ENCODE measurements at regions of chr7 and their contacts with region 1.

Region 1: GRCh38 chr7:116671681-116672595 is at the start of gene MET:
- DNase-seq: peak; percentile 91 to 92
- H3K4me3 ChIP-seq: peak within 1 kb of the TSS; percentile 84
- H3K4me3 Mint-ChIP-seq: peak within 1 kb of the TSS; percentile 94
- H3K27ac Mint-ChIP-seq: peak within 1 kb of the TSS; percentile 47
- H3K4me1 ChIP-seq: peaks cover 5% of the 10 kb centered on the region
- H3K4me1 Mint-ChIP-seq: peaks cover 13% of the 10 kb centered on the region
- H3K27me3 ChIP-seq: no peaks in the 10 kb centered on the region
- H3K27me3 Mint-ChIP-seq: no peaks in the 10 kb centered on the region
- CTCF ChIP-seq: peak; percentile 70 to 87
- total RNA-seq, gene MET: 72.6 and 82.9 TPM in 2 replicates

Region 2: GRCh38 chr7:116165717-116166116 is 506.2 kb before region 1 on chr7:
- CTCF ChIA-PET with region 1: no interaction called
- POLR2A ChIA-PET with region 1: no interaction called
- intact Hi-C with region 1: loop called (anchors 5 kb)
- DNase-seq: no peak
- H3K4me3 ChIP-seq: no peak overlapping the region
- H3K4me3 Mint-ChIP-seq: no peak overlapping the region
- H3K27ac Mint-ChIP-seq: no peak overlapping the region
- H3K4me1 ChIP-seq: peaks cover 48% of the 10 kb centered on the region
- H3K4me1 Mint-ChIP-seq: peaks cover 43% of the 10 kb centered on the region
- H3K27me3 ChIP-seq: no peaks in the 10 kb centered on the region
- H3K27me3 Mint-ChIP-seq: no peaks in the 10 kb centered on the region
- CTCF ChIP-seq: no peak

Region 3: GRCh38 chr7:116478834-116479233 is 193.1 kb before region 1 on chr7:
- CTCF ChIA-PET with region 1: no interaction called
- POLR2A ChIA-PET with region 1: no interaction called
- intact Hi-C with region 1: no loop called
- DNase-seq: no peak
- H3K4me3 ChIP-seq: no peak overlapping the region
- H3K4me3 Mint-ChIP-seq: no peak overlapping the region
- H3K27ac Mint-ChIP-seq: no peak overlapping the region
- H3K4me1 ChIP-seq: no peaks in the 10 kb centered on the region
- H3K4me1 Mint-ChIP-seq: peaks cover 12% of the 10 kb centered on the region
- H3K27me3 ChIP-seq: no peaks in the 10 kb centered on the region
- H3K27me3 Mint-ChIP-seq: no peaks in the 10 kb centered on the region
- CTCF ChIP-seq: no peak

Region 4: DNA sequence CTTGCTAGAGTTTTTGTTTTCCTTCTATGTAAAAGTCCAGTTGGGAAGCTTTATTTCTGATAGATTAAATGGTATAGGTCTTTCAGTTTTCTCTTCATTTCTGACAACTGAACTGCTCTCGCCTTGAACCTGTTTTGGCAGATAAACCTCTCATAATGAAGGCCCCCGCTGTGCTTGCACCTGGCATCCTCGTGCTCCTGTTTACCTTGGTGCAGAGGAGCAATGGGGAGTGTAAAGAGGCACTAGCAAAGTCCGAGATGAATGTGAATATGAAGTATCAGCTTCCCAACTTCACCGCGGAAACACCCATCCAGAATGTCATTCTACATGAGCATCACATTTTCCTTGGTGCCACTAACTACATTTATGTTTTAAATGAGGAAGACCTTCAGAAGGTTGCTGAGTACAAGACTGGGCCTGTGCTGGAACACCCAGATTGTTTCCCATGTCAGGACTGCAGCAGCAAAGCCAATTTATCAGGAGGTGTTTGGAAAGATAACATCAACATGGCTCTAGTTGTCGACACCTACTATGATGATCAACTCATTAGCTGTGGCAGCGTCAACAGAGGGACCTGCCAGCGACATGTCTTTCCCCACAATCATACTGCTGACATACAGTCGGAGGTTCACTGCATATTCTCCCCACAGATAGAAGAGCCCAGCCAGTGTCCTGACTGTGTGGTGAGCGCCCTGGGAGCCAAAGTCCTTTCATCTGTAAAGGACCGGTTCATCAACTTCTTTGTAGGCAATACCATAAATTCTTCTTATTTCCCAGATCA is 27.2 kb after region 1 on chr7:
- CTCF ChIA-PET with region 1: no interaction called
- POLR2A ChIA-PET with region 1: no interaction called
- intact Hi-C with region 1: loop called (anchors 2 kb)
- DNase-seq: peak; percentile 40 to 44
- H3K4me3 ChIP-seq: no peak overlapping the region
- H3K4me3 Mint-ChIP-seq: no peak overlapping the region
- H3K27ac Mint-ChIP-seq: peak overlapping the region; percentile 51
- H3K4me1 ChIP-seq: peaks cover 25% of the 10 kb centered on the region; the same call in 1 of the 2 replicates
- H3K4me1 Mint-ChIP-seq: peaks cover 15% of the 10 kb centered on the region
- H3K27me3 ChIP-seq: no peaks in the 10 kb centered on the region
- H3K27me3 Mint-ChIP-seq: no peaks in the 10 kb centered on the region
- CTCF ChIP-seq: no peak

Region 5: GRCh38 chr7:116726713-116727431 is 54.9 kb after region 1 on chr7:
- CTCF ChIA-PET with region 1: interaction called, 4 read pairs
- POLR2A ChIA-PET with region 1: no interaction called
- intact Hi-C with region 1: loop called (anchors 1 kb)
- DNase-seq: no peak
- H3K4me3 ChIP-seq: no peak overlapping the region
- H3K4me3 Mint-ChIP-seq: peak overlapping the region; percentile 36
- H3K27ac Mint-ChIP-seq: peak overlapping the region; percentile 48
- H3K4me1 ChIP-seq: peaks cover 46% of the 10 kb centered on the region
- H3K4me1 Mint-ChIP-seq: peaks cover 42% of the 10 kb centered on the region
- H3K27me3 ChIP-seq: no peaks in the 10 kb centered on the region
- H3K27me3 Mint-ChIP-seq: no peaks in the 10 kb centered on the region
- CTCF ChIP-seq: no peak

Region 6: GRCh38 chr7:116780940-116781339 is 109.0 kb after region 1 on chr7:
- CTCF ChIA-PET with region 1: interaction called, 12 read pairs
- POLR2A ChIA-PET with region 1: interaction called, 3 read pairs
- intact Hi-C with region 1: loop called (anchors 1 kb)
- DNase-seq: peak; percentile 94 to 95
- H3K4me3 ChIP-seq: no peak overlapping the region
- H3K4me3 Mint-ChIP-seq: peak overlapping the region; percentile 42
- H3K27ac Mint-ChIP-seq: peak overlapping the region; percentile 92
- H3K4me1 ChIP-seq: peaks cover 69% of the 10 kb centered on the region
- H3K4me1 Mint-ChIP-seq: peaks cover 26% of the 10 kb centered on the region
- H3K27me3 ChIP-seq: no peaks in the 10 kb centered on the region
- H3K27me3 Mint-ChIP-seq: no peaks in the 10 kb centered on the region
- CTCF ChIP-seq: no peak

Region 7: DNA sequence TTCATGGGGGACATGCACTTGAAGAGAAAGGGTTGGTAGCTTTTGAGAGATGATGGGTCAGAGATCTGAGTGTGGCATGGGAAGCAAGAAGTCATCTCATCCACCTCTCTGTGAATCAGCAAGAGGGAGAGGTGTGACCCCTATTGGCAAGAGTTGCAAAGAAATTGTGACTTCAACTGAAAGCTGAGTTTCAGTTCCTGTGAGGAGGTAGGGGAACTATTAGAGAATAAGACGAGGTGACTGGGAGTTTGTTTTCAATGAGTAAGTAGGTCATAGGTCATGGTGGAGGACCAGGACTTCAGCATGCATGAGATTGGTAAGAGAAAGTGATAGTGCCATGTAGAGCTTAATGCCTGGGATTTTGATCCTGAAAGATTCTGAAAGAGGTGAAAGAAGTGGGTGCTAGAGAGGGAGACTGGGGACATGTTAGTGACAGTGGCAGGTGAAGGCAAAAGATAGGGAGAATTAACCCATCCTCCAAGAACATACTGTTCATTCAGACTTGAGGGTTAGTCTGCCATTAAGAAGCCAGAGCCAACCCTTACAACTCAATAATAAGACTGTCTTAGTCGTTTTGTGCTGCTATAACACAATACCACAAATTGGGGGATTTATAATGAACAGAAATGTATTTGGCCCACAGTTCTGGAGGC is 115.0 kb after region 1 on chr7:
- CTCF ChIA-PET with region 1: no interaction called
- POLR2A ChIA-PET with region 1: no interaction called
- intact Hi-C with region 1: loop called (anchors 1 kb)
- DNase-seq: peak in 1 of 2 experiments; percentile 42
- H3K4me3 ChIP-seq: no peak overlapping the region
- H3K4me3 Mint-ChIP-seq: no peak overlapping the region
- H3K27ac Mint-ChIP-seq: no peak overlapping the region
- H3K4me1 ChIP-seq: peaks cover 28% of the 10 kb centered on the region
- H3K4me1 Mint-ChIP-seq: peaks cover 6% of the 10 kb centered on the region
- H3K27me3 ChIP-seq: no peaks in the 10 kb centered on the region
- H3K27me3 Mint-ChIP-seq: no peaks in the 10 kb centered on the region
- CTCF ChIP-seq: peak; percentile 38 to 51